ENCODE measurements at regions of chr1 and their contacts with region 1.

Region 1: DNA sequence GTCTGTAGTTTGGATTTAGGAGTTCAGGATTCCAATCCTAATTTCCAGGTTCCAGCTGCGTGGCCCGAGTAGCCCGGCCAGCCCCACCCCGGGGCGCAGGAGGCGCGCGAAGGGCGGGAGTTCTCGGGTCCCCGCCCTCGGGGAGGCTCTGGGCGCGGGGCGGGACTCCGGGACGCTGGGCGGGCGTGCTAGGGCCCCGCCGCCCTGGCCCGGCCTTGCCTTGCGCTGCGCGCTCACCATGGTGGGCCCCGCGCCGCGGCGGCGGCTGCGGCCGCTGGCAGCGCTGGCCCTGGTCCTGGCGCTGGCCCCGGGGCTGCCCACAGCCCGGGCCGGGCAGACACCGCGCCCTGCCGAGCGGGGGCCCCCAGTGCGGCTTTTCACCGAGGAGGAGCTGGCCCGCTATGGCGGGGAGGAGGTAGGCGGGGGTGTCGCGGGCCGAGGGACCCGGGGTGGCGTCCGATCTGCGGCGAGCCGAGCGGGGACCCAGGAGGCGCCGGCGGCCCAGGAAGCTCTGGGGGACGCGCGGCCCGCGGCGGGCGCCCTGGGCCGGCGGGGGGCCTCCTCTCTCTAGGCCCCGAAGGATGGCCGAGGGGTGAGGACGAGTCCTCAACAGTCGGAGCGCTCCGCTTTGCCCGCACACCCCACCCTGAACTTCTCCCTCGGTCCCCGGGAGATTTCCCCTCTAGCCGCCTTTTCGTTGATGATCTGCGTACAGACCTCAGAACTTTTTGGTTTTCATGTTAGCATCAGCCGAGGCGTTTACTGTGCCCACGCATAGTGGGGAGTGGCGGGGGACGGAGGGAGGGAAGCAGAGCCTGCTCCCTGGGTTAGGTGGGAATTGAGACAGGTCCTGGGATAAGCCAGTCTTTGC is at the start of gene NENF:
- DNase-seq: peak; percentile 95
- H3K4me3 Mint-ChIP-seq: peak within 1 kb of the TSS; percentile 82
- H3K27ac Mint-ChIP-seq: peak within 1 kb of the TSS; percentile 76
- H3K4me1 Mint-ChIP-seq: peaks cover 32% of the 10 kb centered on the region
- H3K27me3 Mint-ChIP-seq: peaks cover 2% of the 10 kb centered on the region
- total RNA-seq, gene NENF: 35.1 and 36.1 TPM in 2 replicates

Region 2: GRCh38 chr1:212368073-212368484 is 64.9 kb before region 1 on chr1:
- intact Hi-C with region 1: no loop called
- DNase-seq: peak; percentile 88
- H3K4me3 Mint-ChIP-seq: no peak overlapping the region
- H3K27ac Mint-ChIP-seq: no peak overlapping the region
- H3K4me1 Mint-ChIP-seq: no peaks in the 10 kb centered on the region
- H3K27me3 Mint-ChIP-seq: no peaks in the 10 kb centered on the region

Region 3: DNA sequence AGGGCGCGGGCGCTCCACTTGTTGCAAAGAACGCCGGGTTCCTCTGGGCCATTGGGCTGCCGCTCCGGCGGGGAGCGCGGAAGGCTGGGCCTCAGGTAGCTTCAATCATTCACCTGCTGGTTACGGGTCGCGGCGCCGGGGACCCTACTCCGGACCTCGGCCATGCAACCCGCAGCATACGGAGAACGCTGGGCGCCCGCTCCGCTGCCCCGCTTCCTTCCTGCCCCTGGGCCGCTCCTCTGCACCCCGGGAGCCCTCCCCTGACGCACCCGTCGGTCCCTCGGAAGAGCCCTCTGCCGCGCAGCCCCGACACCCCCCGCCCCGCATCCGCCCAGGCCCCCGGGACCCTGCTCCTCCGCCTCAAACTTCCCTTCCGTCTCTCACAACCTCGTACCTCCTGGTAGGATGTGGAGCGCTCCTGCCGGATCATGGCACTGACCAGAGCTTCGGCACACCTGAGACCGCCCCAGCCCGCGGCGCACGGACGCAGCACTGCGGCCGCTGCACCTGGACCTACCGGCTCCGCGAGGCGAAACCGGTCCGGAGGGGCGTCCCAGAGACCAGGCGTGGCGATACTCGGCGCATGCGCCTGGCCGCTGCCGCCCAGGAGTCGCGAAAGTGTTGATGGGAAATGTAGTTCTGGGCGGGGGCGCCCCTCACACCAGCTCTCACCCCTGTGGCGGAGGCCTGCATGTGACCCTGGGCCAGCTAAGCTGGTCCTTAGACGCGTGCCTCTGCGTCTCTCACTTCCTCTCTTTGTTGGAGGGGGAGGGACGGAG is 18.4 kb before region 1 on chr1 and contains the start of gene PACC1:
- intact Hi-C with region 1: loop called (anchors 1 kb)
- DNase-seq: peak; percentile 97
- H3K4me3 Mint-ChIP-seq: peak within 1 kb of the TSS; percentile 99
- H3K27ac Mint-ChIP-seq: peak within 1 kb of the TSS; percentile 96
- H3K4me1 Mint-ChIP-seq: peaks cover 25% of the 10 kb centered on the region
- H3K27me3 Mint-ChIP-seq: no peaks in the 10 kb centered on the region
- total RNA-seq, gene PACC1: 16.0 and 19.4 TPM in 2 replicates

Region 4: GRCh38 chr1:212450331-212450881 is 17.5 kb after region 1 on chr1:
- intact Hi-C with region 1: loop called (anchors 2 kb)
- DNase-seq: no peak
- H3K4me3 Mint-ChIP-seq: no peak overlapping the region
- H3K27ac Mint-ChIP-seq: no peak overlapping the region
- H3K4me1 Mint-ChIP-seq: peaks cover 2% of the 10 kb centered on the region
- H3K27me3 Mint-ChIP-seq: no peaks in the 10 kb centered on the region